ENCODE measurements at regions of chr4 and their contacts with region 1.

Region 1: GRCh38 chr4:174365018-174365587 is 81.4 kb downstream of the CEP44 start:
- ATAC-seq: no peak
- H3K4me3 ChIP-seq: no peak overlapping the region
- H3K27ac ChIP-seq: no peak overlapping the region
- H3K4me1 ChIP-seq: no peaks in the 10 kb centered on the region

Region 2: DNA sequence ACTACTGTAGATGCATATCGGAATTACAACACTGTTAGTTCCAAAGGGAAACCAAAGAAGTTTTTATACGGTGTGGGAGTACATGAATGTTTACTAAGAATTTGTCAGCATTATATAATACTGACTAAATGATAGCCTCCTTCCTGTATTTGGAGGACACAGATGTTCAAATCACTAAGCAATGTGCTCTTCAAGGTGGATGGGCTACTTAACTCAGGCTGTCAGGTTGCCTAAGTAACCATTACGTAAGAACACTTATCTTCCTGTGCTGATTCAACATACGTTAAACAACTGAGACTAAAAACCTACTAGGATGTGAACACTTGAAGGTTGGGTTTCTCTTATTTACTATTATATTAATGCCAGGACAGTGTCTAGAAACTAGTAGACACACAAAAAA is 239.1 kb after region 1 on chr4:
- in situ Hi-C with region 1: loop called in 1 of 9 experiments (anchors 25 kb)
- ATAC-seq: peak in 2 of 8 experiments; percentile 57 to 85
- H3K4me3 ChIP-seq: no peak overlapping the region
- H3K27ac ChIP-seq: no peak overlapping the region
- H3K4me1 ChIP-seq: no peaks in the 10 kb centered on the region

Region 3: GRCh38 chr4:174631901-174632758 is 267.0 kb after region 1 on chr4:
- in situ Hi-C with region 1: loop called in 3 of 9 experiments (anchors 10 to 25 kb)
- ATAC-seq: peak in 3 of 8 experiments; percentile 57 to 67 (median 64)
- H3K4me3 ChIP-seq: no peak overlapping the region
- H3K27ac ChIP-seq: no peak overlapping the region
- H3K4me1 ChIP-seq: no peaks in the 10 kb centered on the region

Region 4: GRCh38 chr4:174714393-174715211 is 349.5 kb after region 1 on chr4:
- in situ Hi-C with region 1: loop called in 1 of 9 experiments (anchors 25 kb)
- ATAC-seq: peak in 3 of 8 experiments; percentile 54 to 74 (median 59)
- H3K4me3 ChIP-seq: no peak overlapping the region
- H3K27ac ChIP-seq: no peak overlapping the region
- H3K4me1 ChIP-seq: no peaks in the 10 kb centered on the region

Region 5: DNA sequence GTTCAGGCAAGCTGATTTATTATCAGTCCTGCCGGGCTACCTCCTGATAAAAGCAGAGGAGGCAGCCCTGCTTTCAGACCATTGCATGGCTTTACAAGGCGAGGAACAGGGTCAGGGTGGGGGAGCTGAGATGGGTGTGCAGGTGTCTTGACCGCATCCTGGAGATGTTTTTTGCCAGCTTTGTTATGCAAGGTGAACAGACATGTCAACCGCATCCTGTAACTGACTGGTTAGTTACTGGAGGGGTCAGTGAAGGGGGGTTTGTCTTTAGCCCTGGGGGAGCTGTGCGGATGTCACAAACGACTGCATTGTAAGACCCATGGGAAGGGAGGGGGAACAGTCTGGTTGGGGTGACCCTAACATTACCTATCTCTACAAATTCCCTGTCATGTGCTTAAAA is 563.1 kb after region 1 on chr4:
- in situ Hi-C with region 1: no loop called
- ATAC-seq: no peak
- H3K4me3 ChIP-seq: no peak overlapping the region
- H3K27ac ChIP-seq: no peak overlapping the region
- H3K4me1 ChIP-seq: no peaks in the 10 kb centered on the region

Region 6: GRCh38 chr4:175536852-175537453 is 1171.8 kb after region 1 on chr4:
- in situ Hi-C with region 1: loop called in 1 of 9 experiments (anchors 25 kb)
- ATAC-seq: peak in 4 of 8 experiments; percentile 16 to 54 (median 35)
- H3K4me3 ChIP-seq: no peak overlapping the region
- H3K27ac ChIP-seq: no peak overlapping the region
- H3K4me1 ChIP-seq: no peaks in the 10 kb centered on the region